ENCODE measurements at regions of chr20 and their contacts with region 1.

Region 1: GRCh38 chr20:16801919-16802911 is 54.1 kb downstream of the OTOR start:
- DNase-seq: peak; percentile 40

Region 2: GRCh38 chr20:16501301-16501700 is 300.9 kb before region 1 on chr20:
- CTCF ChIA-PET with region 1: no interaction called
- POLR2A ChIA-PET with region 1: no interaction called
- DNase-seq: no peak

Region 3: DNA sequence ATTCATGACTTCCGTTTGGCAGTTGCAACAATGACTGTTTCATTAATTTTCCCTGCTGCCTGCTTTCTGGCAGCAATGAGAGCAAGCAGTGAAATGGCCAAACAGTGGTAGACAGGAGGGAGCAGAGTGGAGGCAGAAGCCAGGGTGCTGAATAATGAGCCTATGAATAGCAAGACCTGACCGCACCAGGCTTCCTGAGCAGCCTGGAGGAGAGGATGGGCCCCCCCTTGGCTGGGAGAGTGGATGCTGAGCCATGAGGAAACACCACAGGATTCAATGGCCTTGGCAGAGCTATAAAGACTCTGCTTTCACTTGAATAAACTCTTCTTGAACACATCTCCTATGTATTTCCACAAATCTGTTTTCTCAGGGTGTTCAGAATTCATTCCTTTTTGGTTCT is 140.5 kb before region 1 on chr20:
- CTCF ChIA-PET with region 1: no interaction called
- POLR2A ChIA-PET with region 1: no interaction called
- DNase-seq: no peak

Region 4: GRCh38 chr20:16821211-16822089 is 19.2 kb after region 1 on chr20:
- CTCF ChIA-PET with region 1: interaction called, 38 read pairs
- POLR2A ChIA-PET with region 1: no interaction called
- DNase-seq: peak; percentile 62

Region 5: DNA sequence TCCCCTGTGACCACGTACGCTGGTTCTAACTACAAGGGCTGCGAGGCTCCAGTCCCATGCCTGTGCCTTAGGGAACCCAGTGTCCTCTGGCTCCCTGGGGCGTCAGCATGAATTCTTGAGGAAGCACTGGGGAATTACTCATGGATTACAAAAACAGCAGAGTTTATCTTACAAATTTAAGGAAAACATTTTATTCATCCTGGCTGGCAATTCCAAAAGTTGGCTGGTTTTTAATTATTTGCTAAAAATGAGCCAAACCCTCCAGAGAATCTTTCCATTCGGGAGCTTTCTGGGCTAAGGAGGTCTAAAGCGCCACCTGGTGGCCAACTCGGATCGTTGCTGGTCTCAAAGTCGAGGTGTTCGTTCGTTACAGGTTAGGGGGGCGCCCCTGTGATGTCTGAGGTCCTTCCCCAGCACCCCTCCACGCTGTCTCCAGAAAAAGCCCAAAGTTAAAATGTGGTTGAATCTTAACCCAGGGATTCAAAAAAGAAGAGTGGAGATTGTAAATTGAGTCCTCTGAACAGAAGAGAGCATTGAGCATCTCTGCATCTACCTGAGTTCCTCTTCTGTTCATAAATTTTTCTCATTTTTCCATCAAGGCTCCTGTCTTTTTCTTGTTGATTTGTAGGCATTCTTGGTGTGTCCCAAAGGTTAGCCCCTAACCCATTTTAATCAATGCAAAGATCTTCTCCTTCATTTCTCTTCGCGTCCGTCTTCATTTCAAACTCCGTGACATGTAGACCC is 629.6 kb after region 1 on chr20:
- CTCF ChIA-PET with region 1: interaction called, 10 read pairs
- POLR2A ChIA-PET with region 1: no interaction called
- DNase-seq: peak; percentile 55